T-cell (primary cell): ENCODE measurements at regions of chr16 and their contacts with region 1.

Region 1: GRCh38 chr16:24471561-24472350 is 67.6 kb upstream of the RBBP6 start:
- DNase-seq: no peak
- ATAC-seq: no peak
- H3K4me3 ChIP-seq: no peak overlapping the region
- H3K4me3 Mint-ChIP-seq: no peak overlapping the region
- H3K27ac ChIP-seq: no peak overlapping the region
- H3K27ac Mint-ChIP-seq: no peak overlapping the region
- H3K4me1 ChIP-seq: no peaks in the 10 kb centered on the region
- H3K4me1 Mint-ChIP-seq: no peaks in the 10 kb centered on the region
- H3K27me3 ChIP-seq: peaks cover 0 to 19% of the 10 kb centered on the region in 2 experiments
- H3K27me3 Mint-ChIP-seq: peaks cover 33% of the 10 kb centered on the region in 2 donors

Region 2: GRCh38 chr16:22857296-22858025 is 1614.3 kb before region 1 on chr16:
- CTCF ChIA-PET with region 1: no interaction called
- POLR2A ChIA-PET with region 1: interaction called in 1 of 2 experiments, 10 read pairs
- DNase-seq: no peak
- ATAC-seq: no peak
- H3K4me3 ChIP-seq: no peak overlapping the region
- H3K4me3 Mint-ChIP-seq: no peak overlapping the region
- H3K27ac ChIP-seq: no peak overlapping the region
- H3K27ac Mint-ChIP-seq: no peak overlapping the region
- H3K4me1 ChIP-seq: no peaks in the 10 kb centered on the region
- H3K4me1 Mint-ChIP-seq: no peaks in the 10 kb centered on the region
- H3K27me3 ChIP-seq: peaks cover 0 to 10% of the 10 kb centered on the region in 2 experiments
- H3K27me3 Mint-ChIP-seq: peaks cover 4 to 20% of the 10 kb centered on the region in 2 donors